Ascending aorta (tissue), 2 donors: ENCODE measurements at regions of chr7 and their contacts with region 1.

Region 1: DNA sequence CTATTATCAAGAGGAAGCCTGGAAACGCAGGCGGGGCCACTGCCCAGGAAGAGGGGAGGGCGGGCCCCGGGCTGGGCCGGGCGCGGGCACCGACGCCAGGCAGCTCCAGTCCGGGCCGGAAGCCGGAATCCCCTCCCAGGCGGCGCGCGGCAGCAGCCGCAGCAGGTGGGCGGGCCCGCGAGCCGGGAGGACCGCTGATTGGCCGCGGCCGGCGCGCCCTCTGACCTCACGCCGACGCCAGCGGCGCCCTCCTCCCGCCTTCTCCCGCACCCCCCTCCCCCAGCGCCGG is 438 bp downstream of the BCL7B start:
- DNase-seq: peak; percentile 82 to 97
- H3K4me3 ChIP-seq: peak overlapping the region; percentile 96 to 97
- H3K27ac ChIP-seq: peak overlapping the region; percentile 99 to 100
- H3K4me1 ChIP-seq: peaks cover 3 to 10% of the 10 kb centered on the region in 2 donors
- H3K27me3 ChIP-seq: no peaks in the 10 kb centered on the region
- CTCF ChIP-seq: no peak

Region 2: DNA sequence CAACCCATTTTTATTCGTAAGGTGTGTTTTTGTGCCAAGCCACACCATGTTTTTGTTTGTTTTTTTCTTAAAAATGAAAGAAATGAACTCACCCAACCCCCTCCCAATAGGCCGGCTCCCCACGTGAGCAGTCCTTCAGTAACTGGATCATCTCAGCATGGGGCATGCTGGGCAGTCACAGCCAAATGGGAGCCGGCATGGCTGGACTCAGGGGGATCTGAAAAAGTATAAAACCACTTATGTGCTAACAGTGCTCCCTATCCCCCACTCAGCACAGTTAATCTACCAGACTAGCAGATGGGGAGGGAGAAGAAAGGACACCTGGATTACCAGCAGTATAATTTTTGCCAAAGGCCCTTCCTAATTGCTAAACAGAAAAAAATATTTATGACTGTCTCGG is 74.3 kb before region 1 on chr7:
- intact Hi-C with region 1: no loop called
- DNase-seq: no peak
- H3K4me3 ChIP-seq: no peak overlapping the region
- H3K27ac ChIP-seq: no peak overlapping the region
- H3K4me1 ChIP-seq: no peaks in the 10 kb centered on the region
- H3K27me3 ChIP-seq: no peaks in the 10 kb centered on the region
- CTCF ChIP-seq: no peak

Region 3: DNA sequence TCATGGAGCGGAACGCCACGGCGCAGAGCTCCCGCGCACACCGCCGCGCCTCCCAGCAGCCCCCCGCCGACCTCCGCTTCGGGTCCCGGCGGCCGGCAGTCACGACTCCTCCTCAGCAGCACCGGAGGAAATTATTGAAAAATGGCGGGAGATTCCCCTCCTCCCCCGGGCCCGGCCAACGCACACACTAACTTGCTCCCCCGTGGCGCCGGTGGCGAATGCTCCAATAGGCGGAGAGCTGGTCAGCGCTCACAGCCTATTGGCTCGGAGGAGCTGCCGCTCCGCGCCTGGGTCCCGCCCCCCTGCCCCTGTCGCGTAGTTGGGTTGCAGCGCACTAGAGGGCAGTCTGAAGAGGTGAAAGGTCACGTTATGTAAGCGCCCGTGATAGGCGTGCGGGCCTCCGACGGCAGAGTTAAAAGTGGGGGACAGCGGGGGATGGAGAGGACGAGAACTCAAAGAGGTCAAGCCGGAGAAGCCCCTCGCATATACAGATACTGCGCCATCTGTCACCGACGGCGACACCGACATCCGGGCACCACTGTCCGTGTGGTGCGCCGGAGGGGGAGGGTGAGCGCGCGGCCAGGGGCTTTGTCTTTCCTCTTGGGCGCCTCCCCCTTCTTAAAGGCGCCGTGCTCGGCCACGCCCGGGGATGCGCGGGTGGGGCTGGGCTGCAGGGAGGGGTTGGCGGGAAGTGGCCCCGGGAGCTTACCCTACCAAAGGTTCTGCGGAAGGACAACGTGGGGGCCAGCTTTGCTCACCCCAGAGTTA is 34.8 kb before region 1 on chr7 and contains the start of gene BAZ1B:
- intact Hi-C with region 1: loop called (anchors 1 kb)
- DNase-seq: peak; percentile 96 to 99
- H3K4me3 ChIP-seq: peak within 1 kb of the TSS; percentile 77 to 95
- H3K27ac ChIP-seq: peak within 1 kb of the TSS; percentile 84 to 86
- H3K4me1 ChIP-seq: peaks cover 5 to 27% of the 10 kb centered on the region in 2 donors
- H3K27me3 ChIP-seq: no peaks in the 10 kb centered on the region
- CTCF ChIP-seq: peak; percentile 9 to 32 (median 19)
- total RNA-seq, gene BAZ1B: 28.1 TPM

Region 4: GRCh38 chr7:73578342-73579127 is 21.5 kb after region 1 on chr7 and contains the start of gene TBL2:
- intact Hi-C with region 1: loop called (anchors 1 kb)
- DNase-seq: peak; percentile 98 to 100
- H3K4me3 ChIP-seq: peak within 1 kb of the TSS; percentile 80 to 81
- H3K27ac ChIP-seq: peak within 1 kb of the TSS; percentile 87 to 90
- H3K4me1 ChIP-seq: peaks cover 0 to 12% of the 10 kb centered on the region in 2 donors
- H3K27me3 ChIP-seq: no peaks in the 10 kb centered on the region
- CTCF ChIP-seq: peak in 1 of 3 experiments; percentile 32
- total RNA-seq, gene TBL2: 52.9 TPM